Activated CD4-positive, alpha-beta T cell treated with anti-CD3 and anti-CD28 coated beads for 36 hours (primary cell): ENCODE measurements at regions of chr2 and their contacts with region 1.

Region 1: DNA sequence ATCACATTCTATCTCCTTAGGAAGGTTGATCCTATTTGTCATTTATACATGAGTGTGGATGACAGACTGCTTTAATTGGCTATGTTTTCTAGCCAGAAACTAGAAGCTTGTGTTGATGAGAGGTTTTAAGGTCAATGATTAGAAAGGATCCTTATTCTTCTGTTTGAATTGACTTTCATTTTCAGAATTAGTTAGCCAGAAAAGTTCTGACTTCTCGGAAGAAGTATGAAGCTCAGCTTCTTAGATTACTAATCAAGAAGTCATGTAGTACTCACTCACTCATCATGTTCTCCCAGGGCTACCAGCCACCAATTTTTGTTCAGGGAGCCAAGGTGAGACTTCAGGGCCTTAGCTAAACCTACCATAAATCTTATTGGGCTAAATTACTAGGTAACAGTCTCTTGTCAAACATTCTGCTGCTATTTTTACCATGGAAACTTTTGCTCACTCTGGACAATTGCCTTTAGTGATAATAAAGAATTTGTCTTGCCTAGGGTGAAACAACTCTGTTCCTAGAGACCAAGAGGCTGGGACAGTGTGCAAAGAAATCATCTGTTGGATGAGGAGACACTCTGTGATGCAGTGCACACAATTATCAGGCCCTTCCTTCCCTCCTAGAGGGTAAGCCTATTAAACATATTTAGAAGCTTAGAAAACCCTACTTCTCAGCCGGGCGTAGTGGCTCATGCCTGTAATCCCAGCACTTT is 111.6 kb upstream of the DNMT3A start:
- DNase-seq: peak; percentile 69
- ATAC-seq: peak; percentile 97
- H3K4me3 Mint-ChIP-seq: peak overlapping the region; percentile 19
- H3K27ac Mint-ChIP-seq: peak overlapping the region; percentile 91
- H3K4me1 Mint-ChIP-seq: peaks cover 30% of the 10 kb centered on the region
- H3K27me3 Mint-ChIP-seq: no peaks in the 10 kb centered on the region

Region 2: GRCh38 chr2:25362049-25362433 is 91.3 kb before region 1 on chr2:
- CTCF ChIA-PET with region 1: interaction called, 15 read pairs
- POLR2A ChIA-PET with region 1: no interaction called
- intact Hi-C with region 1: loop called in 1 of 2 experiments (anchors 1 kb)
- DNase-seq: peak; percentile 97
- ATAC-seq: peak; percentile 97
- H3K4me3 Mint-ChIP-seq: peak overlapping the region; percentile 79
- H3K27ac Mint-ChIP-seq: peak overlapping the region; percentile 96
- H3K4me1 Mint-ChIP-seq: peaks cover 14% of the 10 kb centered on the region
- H3K27me3 Mint-ChIP-seq: no peaks in the 10 kb centered on the region

Region 3: DNA sequence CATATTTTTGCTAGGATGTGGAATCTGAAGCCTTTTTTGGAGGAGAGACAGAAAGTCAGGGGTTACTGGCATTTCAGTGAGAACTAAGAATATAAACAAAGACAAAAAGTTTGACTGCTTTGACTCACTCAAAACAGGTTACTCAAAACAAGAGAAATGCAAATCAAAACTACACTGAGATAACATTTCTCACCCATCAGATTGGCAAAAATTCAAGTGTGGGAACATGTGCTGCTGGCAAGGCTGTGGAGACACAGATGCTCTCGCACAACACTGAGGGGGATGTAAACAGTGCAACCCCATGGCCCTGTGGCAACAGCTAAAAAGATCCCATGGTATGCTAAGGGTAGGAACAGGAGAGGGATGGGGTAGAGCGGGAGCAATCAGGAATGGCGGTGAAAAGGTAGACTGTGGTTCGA is 133.4 kb after region 1 on chr2:
- CTCF ChIA-PET with region 1: no interaction called
- POLR2A ChIA-PET with region 1: no interaction called
- intact Hi-C with region 1: loop called in 1 of 2 experiments (anchors 2 kb)
- DNase-seq: peak; percentile 65
- ATAC-seq: peak; percentile 88
- H3K4me3 Mint-ChIP-seq: no peak overlapping the region
- H3K27ac Mint-ChIP-seq: peak overlapping the region; percentile 68
- H3K4me1 Mint-ChIP-seq: peaks cover 18% of the 10 kb centered on the region
- H3K27me3 Mint-ChIP-seq: no peaks in the 10 kb centered on the region

Region 4: GRCh38 chr2:25756536-25756935 is 303.2 kb after region 1 on chr2:
- CTCF ChIA-PET with region 1: no interaction called
- POLR2A ChIA-PET with region 1: no interaction called
- intact Hi-C with region 1: no loop called
- DNase-seq: no peak
- ATAC-seq: no peak
- H3K4me3 Mint-ChIP-seq: no peak overlapping the region
- H3K27ac Mint-ChIP-seq: no peak overlapping the region
- H3K4me1 Mint-ChIP-seq: peaks cover 19% of the 10 kb centered on the region
- H3K27me3 Mint-ChIP-seq: no peaks in the 10 kb centered on the region

Region 5: DNA sequence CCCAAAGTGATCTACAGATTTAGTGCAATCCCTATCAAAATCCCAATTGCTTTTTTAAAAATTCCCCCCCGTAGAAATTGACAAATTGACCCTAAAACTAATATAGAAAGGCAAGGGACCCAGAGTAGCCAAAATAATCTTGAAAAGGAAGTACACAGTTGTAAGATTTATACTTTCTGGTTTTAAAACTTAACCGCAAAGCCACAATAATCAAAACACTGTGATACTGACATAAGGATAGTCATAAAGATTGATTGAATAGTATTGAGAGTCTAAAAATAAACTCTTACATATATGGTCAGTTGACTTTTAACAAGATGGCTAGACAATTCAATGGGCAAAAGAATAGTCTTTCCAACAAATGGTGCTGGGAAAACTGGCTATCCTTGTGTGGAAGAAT is 660.8 kb after region 1 on chr2:
- CTCF ChIA-PET with region 1: no interaction called
- POLR2A ChIA-PET with region 1: no interaction called
- intact Hi-C with region 1: no loop called
- DNase-seq: no peak
- ATAC-seq: no peak
- H3K4me3 Mint-ChIP-seq: no peak overlapping the region
- H3K27ac Mint-ChIP-seq: no peak overlapping the region
- H3K4me1 Mint-ChIP-seq: peaks cover 8% of the 10 kb centered on the region
- H3K27me3 Mint-ChIP-seq: no peaks in the 10 kb centered on the region